ENCODE measurements at regions of chr17 and their contacts with region 1.

Region 1: DNA sequence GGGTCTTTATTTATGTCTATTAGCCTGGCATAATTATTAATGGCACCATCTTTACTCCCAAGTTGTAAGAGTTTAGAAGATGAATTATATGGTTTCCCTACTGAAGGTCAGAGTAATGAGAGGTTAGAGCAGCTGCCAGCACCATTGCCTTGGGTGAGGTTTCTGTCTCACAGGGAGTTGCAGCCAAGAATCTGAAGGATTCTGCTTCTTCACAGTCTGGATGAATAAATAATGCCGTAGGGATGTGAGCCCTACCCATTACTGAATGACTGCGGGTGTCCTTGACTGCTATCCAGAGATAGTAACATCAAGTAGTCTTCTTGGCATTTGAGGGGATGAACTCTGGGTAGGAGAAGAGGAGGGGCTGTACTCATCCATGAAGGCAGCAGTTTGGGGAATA is 52.8 kb upstream of the SMIM36 start:
- DNase-seq: no peak
- H3K4me3 Mint-ChIP-seq: no peak overlapping the region
- H3K27ac Mint-ChIP-seq: no peak overlapping the region
- H3K4me1 Mint-ChIP-seq: peaks cover 33% of the 10 kb centered on the region
- H3K27me3 Mint-ChIP-seq: peaks cover 5% of the 10 kb centered on the region

Region 2: GRCh38 chr17:55625521-55625920 is 61.4 kb after region 1 on chr17:
- CTCF ChIA-PET with region 1: no interaction called
- POLR2A ChIA-PET with region 1: no interaction called
- intact Hi-C with region 1: no loop called
- DNase-seq: peak; percentile 52
- H3K4me3 Mint-ChIP-seq: no peak overlapping the region
- H3K27ac Mint-ChIP-seq: no peak overlapping the region
- H3K4me1 Mint-ChIP-seq: peaks cover 19% of the 10 kb centered on the region
- H3K27me3 Mint-ChIP-seq: peaks cover 16% of the 10 kb centered on the region

Region 3: GRCh38 chr17:55806745-55807495 is 242.8 kb after region 1 on chr17:
- CTCF ChIA-PET with region 1: no interaction called
- POLR2A ChIA-PET with region 1: no interaction called
- intact Hi-C with region 1: loop called (anchors 5 kb)
- DNase-seq: peak; percentile 18
- H3K4me3 Mint-ChIP-seq: no peak overlapping the region
- H3K27ac Mint-ChIP-seq: peak overlapping the region; percentile 45
- H3K4me1 Mint-ChIP-seq: peaks cover 9% of the 10 kb centered on the region
- H3K27me3 Mint-ChIP-seq: peaks cover 1% of the 10 kb centered on the region